Activated CD8-positive, alpha-beta T cell treated with anti-CD3 and anti-CD28 coated beads, Interleukin-2, amount 10 ng/mL, durations not matched to agents 7 days and 5 days (primary cell): ENCODE measurements at regions of chr6 and their contacts with region 1.

Region 1: GRCh38 chr6:30424549-30424948 is 64.8 kb upstream of the HLA-E start:
- DNase-seq: no peak
- ATAC-seq: no peak
- H3K4me3 Mint-ChIP-seq: no peak overlapping the region
- H3K27ac Mint-ChIP-seq: no peak overlapping the region
- H3K4me1 Mint-ChIP-seq: peaks cover 5% of the 10 kb centered on the region
- H3K27me3 Mint-ChIP-seq: peaks cover 57% of the 10 kb centered on the region

Region 2: DNA sequence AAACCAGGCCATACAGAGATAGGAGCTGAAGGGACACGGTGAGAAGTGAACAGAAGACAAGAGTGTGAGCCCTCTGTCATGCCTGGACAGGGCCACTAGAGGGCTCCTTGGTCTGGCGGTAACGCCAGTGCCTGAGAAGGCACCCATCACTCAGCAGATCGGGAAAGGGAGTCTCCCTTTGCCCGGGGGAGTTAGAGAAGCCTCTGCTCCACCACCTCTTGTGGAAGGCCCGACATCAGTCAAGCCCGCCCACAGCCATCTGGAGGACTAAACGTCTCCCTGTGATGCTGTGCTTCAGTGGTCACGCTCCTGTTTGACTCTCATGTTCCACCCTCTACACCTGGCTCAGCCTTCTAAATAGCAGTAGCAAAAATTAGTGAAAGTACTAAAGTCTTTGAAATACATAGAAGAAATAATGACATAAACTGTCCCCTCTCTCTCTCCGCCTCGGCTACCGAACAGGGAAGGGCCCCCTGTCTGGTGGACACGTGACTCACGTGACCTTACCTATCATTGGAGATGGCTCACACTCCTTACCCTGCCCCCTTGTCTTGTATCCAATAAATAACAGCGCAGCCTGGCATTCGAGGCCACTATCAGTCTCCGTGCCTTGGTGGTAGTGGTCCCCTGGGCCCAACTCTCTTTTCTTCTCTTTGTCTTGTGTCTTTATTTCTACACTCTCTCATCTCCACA is 12.9 kb before region 1 on chr6:
- CTCF ChIA-PET with region 1: interaction called, 10 read pairs
- POLR2A ChIA-PET with region 1: no interaction called
- DNase-seq: peak; percentile 74
- ATAC-seq: peak; percentile 68
- H3K4me3 Mint-ChIP-seq: no peak overlapping the region
- H3K27ac Mint-ChIP-seq: no peak overlapping the region
- H3K4me1 Mint-ChIP-seq: peaks cover 7% of the 10 kb centered on the region
- H3K27me3 Mint-ChIP-seq: peaks cover 62% of the 10 kb centered on the region

Region 3: GRCh38 chr6:30447237-30447636 is 22.7 kb after region 1 on chr6:
- CTCF ChIA-PET with region 1: no interaction called
- POLR2A ChIA-PET with region 1: no interaction called
- DNase-seq: no peak
- ATAC-seq: no peak
- H3K4me3 Mint-ChIP-seq: no peak overlapping the region
- H3K27ac Mint-ChIP-seq: no peak overlapping the region
- H3K4me1 Mint-ChIP-seq: peaks cover 23% of the 10 kb centered on the region
- H3K27me3 Mint-ChIP-seq: peaks cover 87% of the 10 kb centered on the region

Region 4: DNA sequence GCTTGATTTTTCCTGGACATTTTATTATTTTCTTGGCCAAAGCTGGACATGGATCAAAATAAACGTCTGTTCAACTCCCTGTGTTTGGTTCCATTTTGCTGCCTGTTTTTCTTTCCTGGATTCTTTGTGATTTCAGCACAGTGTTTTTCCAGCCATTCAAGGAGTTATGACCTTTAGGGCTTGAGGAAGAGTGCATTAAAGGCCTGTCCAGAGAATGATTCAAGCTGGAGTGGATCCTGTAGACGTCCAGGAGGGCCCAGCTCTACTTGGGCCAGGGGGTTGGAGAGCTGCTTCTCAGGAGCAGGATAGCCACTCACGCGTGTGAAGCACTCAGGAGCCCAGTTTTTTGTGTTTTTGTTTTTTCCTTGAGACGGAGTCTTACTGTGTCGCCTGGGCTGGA is 376.3 kb after region 1 on chr6:
- CTCF ChIA-PET with region 1: no interaction called
- POLR2A ChIA-PET with region 1: no interaction called
- DNase-seq: no peak
- ATAC-seq: no peak
- H3K4me3 Mint-ChIP-seq: no peak overlapping the region
- H3K27ac Mint-ChIP-seq: no peak overlapping the region
- H3K4me1 Mint-ChIP-seq: peaks cover 33% of the 10 kb centered on the region
- H3K27me3 Mint-ChIP-seq: no peaks in the 10 kb centered on the region